Mammary epithelial cell (primary cell): ENCODE measurements at regions of chr12 and their contacts with region 1.

Region 1: DNA sequence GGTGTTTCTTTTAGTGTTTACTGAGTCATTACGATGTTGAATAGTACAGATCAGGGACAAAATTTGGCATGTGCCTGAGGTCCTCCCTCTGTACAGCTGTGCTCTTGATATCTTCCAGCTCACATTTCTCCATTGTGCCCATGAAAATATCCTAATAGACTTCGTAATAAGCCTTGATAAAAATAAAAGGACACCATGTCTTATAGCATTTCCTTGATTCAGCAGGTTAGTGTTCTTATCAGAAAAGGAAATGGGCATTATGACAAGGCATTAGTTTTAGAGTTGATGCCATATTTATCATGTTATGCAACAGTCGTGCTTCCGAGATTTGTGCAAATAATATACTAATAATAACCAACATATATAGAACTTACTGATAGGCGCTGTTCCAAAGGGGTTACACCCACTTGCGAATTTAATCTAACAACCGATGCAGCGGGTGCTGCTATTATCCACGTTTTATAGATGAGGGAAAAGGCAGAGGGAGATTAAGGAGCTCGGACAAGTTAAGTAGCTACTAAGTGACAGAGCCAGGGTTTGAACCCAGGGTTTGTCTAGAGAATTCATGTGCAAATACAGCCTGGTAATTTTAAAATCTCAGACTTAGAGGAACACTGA is 15.1 kb upstream of the WNK1 start:
- DNase-seq: no peak
- H3K4me3 ChIP-seq: no peak overlapping the region
- H3K27ac ChIP-seq: no peak overlapping the region
- H3K4me1 ChIP-seq: no peaks in the 10 kb centered on the region
- H3K27me3 ChIP-seq: no peaks in the 10 kb centered on the region
- CTCF ChIP-seq: no peak

Region 2: DNA sequence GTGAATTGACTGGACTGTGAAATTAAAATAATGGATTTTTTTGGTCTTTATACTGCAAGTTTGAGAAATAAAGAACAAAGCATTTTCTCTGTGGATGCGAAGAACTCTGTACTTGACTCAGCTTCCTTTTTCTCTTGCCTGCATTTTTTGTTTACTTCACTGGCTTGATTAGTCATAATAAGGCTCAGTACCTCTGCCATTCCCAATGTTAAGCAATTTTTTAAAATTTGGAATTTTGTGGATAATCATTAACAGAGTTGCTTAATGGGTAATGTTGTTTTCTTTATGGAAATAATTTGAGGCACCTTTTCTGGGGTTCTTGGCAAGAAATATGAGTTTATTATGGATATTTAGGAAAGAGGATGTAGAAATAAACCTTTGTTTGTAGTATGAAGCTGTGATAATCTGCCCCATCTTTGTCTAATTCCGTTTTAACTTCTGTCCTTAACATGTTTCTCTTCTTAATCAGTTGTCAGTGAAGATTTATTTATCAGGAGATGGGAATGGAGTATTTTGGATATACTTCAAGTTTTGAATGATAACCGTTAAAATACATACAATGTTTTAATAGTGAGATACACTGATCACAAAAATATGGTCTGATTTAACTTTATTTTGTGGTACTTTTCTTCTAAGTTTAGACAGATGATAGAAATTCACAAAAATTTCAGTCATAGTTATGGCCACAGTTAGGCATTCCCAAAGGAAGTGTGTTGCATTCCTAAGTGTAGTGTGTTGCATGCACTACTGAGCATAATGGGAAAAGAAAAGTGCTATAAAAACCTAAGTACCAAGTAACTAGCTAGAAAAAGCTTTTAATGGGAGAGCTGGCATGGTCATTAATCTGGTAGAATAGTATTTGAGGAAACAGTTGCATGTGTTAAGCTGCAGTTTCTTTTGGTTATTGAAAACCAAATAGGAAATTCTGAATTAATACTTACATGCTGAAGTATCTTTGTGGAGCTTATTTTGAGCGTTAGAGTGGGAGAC is 42.8 kb after region 1 on chr12:
- CTCF ChIA-PET with region 1: no interaction called
- dilution Hi-C with region 1: loop called (anchors 10 kb)
- in situ Hi-C with region 1: no loop called
- intact Hi-C with region 1: no loop called
- DNase-seq: peak; percentile 40
- H3K4me3 ChIP-seq: no peak overlapping the region
- H3K27ac ChIP-seq: no peak overlapping the region
- H3K4me1 ChIP-seq: peaks cover 11% of the 10 kb centered on the region
- H3K27me3 ChIP-seq: no peaks in the 10 kb centered on the region
- CTCF ChIP-seq: no peak